Natural killer cell (primary cell): ENCODE measurements at regions of chr9 and their contacts with region 1.

Region 1: DNA sequence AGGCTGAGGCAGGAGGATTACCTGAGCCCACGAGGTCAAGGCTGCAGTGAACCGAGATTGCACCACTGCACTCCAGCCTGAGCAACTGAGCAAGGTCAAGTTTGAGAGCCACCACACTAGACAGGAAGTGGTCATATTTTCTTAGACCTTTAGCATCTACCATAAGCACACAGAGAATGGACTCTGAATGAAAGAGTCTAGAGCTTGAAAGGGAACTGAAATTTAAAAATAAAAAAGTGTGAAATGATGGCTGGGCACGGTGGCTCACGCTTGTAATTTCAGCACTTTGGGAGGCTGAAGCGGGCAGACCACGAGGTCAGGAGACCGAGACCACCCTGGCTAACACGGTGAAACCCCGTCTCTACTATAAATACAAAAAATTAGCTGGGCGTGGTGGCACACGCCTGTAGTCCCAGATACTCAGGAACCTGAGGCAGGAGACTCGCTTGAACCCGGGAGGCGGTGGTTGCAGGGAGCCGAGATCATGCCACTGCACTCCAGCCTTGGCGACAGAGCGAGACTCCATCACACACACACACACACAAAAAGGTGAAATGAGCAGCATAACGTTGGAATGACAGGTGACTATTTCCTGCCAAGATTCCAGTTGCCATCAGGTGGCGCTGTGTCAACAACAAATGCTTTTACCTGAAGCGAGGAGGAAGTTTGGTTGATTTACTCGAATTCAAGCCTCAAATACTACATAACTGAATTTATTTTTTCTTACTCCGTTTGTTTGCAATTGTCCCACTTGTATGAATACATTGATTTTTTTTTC is 21.3 kb upstream of the AK3 start:
- DNase-seq: peak; percentile 62 to 91
- ATAC-seq: peak; percentile 62 to 79 (median 69)
- H3K4me3 ChIP-seq: no peak overlapping the region
- H3K4me3 Mint-ChIP-seq: peak overlapping the region; percentile 64
- H3K27ac ChIP-seq: no peak overlapping the region
- H3K27ac Mint-ChIP-seq: no peak overlapping the region
- H3K4me1 ChIP-seq: peaks cover 22% of the 10 kb centered on the region
- H3K4me1 Mint-ChIP-seq: peaks cover 7 to 15% of the 10 kb centered on the region in 2 donors
- H3K27me3 ChIP-seq: no peaks in the 10 kb centered on the region
- H3K27me3 Mint-ChIP-seq: peaks cover 0 to 10% of the 10 kb centered on the region in 2 donors
- CTCF ChIP-seq: peak; percentile 90

Region 2: DNA sequence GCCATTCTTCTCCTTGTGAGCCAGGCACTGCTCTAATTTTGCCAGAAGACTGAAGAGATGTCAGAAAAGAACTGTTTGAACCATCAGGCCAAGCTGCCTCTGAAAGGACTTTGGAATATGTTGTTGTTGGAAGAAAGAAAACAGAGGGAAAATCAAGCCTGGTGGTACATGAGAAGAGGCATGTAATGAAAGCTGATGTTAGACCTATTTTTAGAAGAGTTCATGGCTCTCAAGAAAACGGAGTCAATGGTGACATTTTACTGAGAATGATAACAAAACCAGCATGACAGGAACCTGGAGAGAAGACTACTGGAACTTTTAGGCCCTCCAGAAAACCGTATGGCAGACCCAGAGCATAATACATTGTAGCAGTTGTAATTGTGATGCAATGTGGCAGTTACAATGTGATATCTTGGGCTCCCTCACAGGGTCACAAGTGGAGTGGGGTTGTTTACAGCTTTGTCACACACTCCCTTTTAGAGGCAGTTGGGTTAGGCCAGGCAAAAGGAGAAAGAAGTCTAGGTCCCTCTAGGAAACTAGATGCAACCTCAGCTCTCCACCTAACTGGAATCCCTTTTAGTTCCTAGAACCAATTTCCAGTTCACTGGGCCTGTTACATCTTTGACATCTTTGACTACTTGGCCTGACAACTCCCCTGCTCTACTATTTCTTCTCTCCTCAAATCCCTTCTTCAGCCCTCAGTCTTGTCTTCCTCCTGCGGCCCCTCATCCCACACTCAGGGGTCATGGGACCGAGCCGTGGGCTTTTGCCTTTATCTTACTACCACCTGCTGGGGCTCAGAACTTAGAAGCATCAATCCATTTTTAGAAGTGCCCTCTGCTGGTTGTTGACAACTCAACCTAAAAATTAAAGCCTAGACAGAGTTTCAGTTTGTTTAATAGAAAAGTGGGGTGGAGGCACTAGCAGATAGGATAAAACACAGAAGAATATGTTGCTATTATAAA is 161.6 kb after region 1 on chr9:
- intact Hi-C with region 1: loop called (anchors 1 kb)
- DNase-seq: peak in 1 of 2 donors; percentile 60
- ATAC-seq: peak; percentile 60 to 74 (median 71)
- H3K4me3 ChIP-seq: no peak overlapping the region
- H3K4me3 Mint-ChIP-seq: no peak overlapping the region
- H3K27ac ChIP-seq: no peak overlapping the region
- H3K27ac Mint-ChIP-seq: peak overlapping the region in 1 of 2 donors; percentile 11
- H3K4me1 ChIP-seq: no peaks in the 10 kb centered on the region
- H3K4me1 Mint-ChIP-seq: peaks cover 6% of the 10 kb centered on the region in 2 donors
- H3K27me3 ChIP-seq: no peaks in the 10 kb centered on the region
- H3K27me3 Mint-ChIP-seq: no peaks in the 10 kb centered on the region
- CTCF ChIP-seq: peak; percentile 55

Region 3: GRCh38 chr9:5425006-5425628 is 662.8 kb after region 1 on chr9:
- intact Hi-C with region 1: loop called (anchors 2 kb)
- DNase-seq: peak in 1 of 2 donors; percentile 68
- ATAC-seq: peak; percentile 44 to 66 (median 59)
- H3K4me3 ChIP-seq: no peak overlapping the region
- H3K4me3 Mint-ChIP-seq: no peak overlapping the region
- H3K27ac ChIP-seq: no peak overlapping the region
- H3K27ac Mint-ChIP-seq: no peak overlapping the region
- H3K4me1 ChIP-seq: no peaks in the 10 kb centered on the region
- H3K4me1 Mint-ChIP-seq: peaks cover 7 to 14% of the 10 kb centered on the region in 2 donors
- H3K27me3 ChIP-seq: no peaks in the 10 kb centered on the region
- H3K27me3 Mint-ChIP-seq: no peaks in the 10 kb centered on the region
- CTCF ChIP-seq: peak; percentile 74